Activated naive CD4-positive, alpha-beta T cell treated with anti-CD3 and anti-CD28 coated beads for 36 hours (primary cell): ENCODE measurements at regions of chr2 and their contacts with region 1.

Region 1: GRCh38 chr2:218908721-218909619 is 28.3 kb downstream of the WNT10A start:
- DNase-seq: peak; percentile 96
- H3K4me3 Mint-ChIP-seq: peak overlapping the region; percentile 85
- H3K27ac Mint-ChIP-seq: peak overlapping the region; percentile 72
- H3K4me1 Mint-ChIP-seq: peaks cover 8% of the 10 kb centered on the region
- H3K27me3 Mint-ChIP-seq: peaks cover 18% of the 10 kb centered on the region

Region 2: DNA sequence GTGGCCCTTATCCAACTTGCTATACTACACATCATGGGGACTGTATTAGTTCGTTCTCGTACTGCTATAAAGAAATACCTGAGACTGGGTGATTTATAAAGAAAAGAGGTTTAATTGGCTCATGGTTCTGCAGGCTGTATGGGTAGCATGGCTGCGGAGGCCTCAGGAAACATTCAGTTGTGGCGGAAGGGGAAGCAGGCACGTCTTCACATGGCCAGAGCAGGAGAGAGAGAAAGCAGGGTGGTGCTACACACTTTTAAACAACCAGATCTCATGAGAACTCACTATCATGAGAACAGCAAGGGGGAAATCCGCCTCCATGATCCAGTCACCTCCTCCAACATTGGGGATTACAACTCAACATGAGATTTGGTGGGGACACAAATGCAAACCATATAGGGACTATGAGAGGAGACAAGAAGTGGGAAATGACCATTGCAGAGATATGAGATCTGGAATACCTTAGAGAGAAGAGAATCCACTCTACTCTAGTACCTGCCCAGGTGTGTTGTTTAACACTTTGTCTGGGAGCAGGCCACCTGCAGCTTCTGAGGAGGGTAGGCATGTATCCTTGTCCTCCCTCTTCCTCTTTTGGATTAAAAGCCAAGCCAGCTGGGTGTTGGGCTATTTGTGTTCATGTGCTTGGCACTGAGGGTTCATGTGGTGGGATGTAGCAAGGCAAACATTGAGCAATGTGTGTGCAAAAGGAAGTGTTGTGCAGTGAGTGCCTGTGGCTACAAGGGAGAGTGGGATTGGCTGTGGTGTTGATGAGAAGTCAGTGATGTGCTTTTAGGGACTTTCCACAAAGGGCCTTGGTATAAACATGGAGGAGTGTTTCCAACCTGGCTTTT is 175.6 kb before region 1 on chr2:
- CTCF ChIA-PET with region 1: no interaction called
- intact Hi-C with region 1: loop called (anchors 5 kb)
- DNase-seq: peak; percentile 57
- H3K4me3 Mint-ChIP-seq: no peak overlapping the region
- H3K27ac Mint-ChIP-seq: peak overlapping the region; percentile 20
- H3K4me1 Mint-ChIP-seq: peaks cover 17% of the 10 kb centered on the region
- H3K27me3 Mint-ChIP-seq: no peaks in the 10 kb centered on the region

Region 3: GRCh38 chr2:218876562-218877219 is 32.3 kb before region 1 on chr2:
- CTCF ChIA-PET with region 1: interaction called, 947 read pairs
- intact Hi-C with region 1: no loop called
- DNase-seq: peak; percentile 86
- H3K4me3 Mint-ChIP-seq: no peak overlapping the region
- H3K27ac Mint-ChIP-seq: no peak overlapping the region
- H3K4me1 Mint-ChIP-seq: peaks cover 39% of the 10 kb centered on the region
- H3K27me3 Mint-ChIP-seq: peaks cover 41% of the 10 kb centered on the region

Region 4: DNA sequence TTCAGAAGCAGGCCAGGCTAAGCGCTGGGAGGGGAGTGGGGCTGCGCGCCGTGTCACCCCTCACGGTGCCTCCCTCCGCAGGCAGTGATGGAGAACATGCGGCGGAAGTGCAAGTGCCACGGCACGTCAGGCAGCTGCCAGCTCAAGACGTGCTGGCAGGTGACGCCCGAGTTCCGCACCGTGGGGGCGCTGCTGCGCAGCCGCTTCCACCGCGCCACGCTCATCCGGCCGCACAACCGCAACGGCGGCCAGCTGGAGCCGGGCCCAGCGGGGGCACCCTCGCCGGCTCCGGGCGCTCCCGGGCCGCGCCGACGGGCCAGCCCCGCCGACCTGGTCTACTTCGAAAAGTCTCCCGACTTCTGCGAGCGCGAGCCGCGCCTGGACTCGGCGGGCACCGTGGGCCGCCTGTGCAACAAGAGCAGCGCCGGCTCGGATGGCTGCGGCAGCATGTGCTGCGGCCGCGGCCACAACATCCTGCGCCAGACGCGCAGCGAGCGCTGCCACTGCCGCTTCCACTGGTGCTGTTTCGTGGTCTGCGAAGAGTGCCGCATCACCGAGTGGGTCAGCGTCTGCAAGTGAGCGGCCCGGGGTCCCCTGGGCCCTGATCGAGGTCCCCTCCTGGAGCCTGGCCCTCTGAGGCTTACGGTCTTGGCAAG is 16.1 kb before region 1 on chr2:
- CTCF ChIA-PET with region 1: interaction called, 947 read pairs
- intact Hi-C with region 1: loop called (anchors 1 kb)
- DNase-seq: peak; percentile 90
- H3K4me3 Mint-ChIP-seq: peak overlapping the region; percentile 75
- H3K27ac Mint-ChIP-seq: peak overlapping the region; percentile 76
- H3K4me1 Mint-ChIP-seq: peaks cover 45% of the 10 kb centered on the region
- H3K27me3 Mint-ChIP-seq: no peaks in the 10 kb centered on the region

Region 5: DNA sequence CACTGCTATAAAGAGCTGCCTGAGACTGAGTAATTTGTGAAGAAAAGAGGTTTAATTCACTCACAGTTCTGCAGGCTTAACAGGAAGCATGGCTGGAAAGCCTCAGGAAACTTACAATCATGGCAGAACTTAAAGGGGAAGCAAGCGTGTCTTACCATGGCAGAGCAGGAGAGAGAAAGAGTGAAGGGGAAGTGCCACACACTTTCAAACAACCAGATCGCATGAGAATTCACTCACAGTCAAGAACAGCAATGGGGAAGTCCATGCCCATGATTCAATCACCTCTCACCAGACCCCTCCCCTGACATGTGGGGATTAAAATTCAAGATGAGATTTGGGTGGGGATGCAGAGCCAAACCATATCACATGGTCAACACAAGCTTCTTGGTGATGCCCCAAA is 15.8 kb after region 1 on chr2:
- CTCF ChIA-PET with region 1: no interaction called
- intact Hi-C with region 1: no loop called
- DNase-seq: no peak
- H3K4me3 Mint-ChIP-seq: no peak overlapping the region
- H3K27ac Mint-ChIP-seq: no peak overlapping the region
- H3K4me1 Mint-ChIP-seq: no peaks in the 10 kb centered on the region
- H3K27me3 Mint-ChIP-seq: peaks cover 35% of the 10 kb centered on the region

Region 6: DNA sequence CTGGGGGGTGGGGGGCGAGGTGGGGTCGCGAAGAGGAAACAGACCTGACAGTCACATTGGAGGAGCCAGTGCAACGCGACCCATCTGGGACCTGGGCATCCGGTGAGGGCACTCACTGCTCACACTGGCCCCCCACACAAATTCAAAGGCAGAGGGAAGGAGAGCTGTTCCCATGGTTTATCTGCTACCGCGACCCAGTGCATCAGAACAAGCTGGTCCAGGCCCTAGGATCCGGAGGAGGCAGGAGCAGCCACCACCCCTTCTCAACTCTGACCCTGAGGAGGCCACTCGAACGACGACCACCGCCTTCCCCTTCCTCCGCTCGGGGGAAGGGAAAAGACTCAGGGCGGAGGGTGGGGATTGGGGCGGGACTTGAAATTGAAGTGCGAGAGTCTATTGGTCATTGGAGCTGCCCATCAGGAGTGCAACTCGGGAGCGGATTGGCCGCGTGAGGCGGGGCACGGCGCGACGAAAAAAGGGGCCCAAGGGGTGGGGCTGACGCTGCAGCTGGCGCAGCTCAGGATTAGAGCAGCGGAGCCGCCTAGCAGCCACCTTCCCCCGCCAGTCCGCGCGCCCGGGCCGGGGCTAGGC is 50.3 kb after region 1 on chr2 and contains the start of gene CDK5R2:
- CTCF ChIA-PET with region 1: no interaction called
- intact Hi-C with region 1: loop called (anchors 1 kb)
- DNase-seq: peak; percentile 80
- H3K4me3 Mint-ChIP-seq: peak within 1 kb of the TSS; percentile 41
- H3K27ac Mint-ChIP-seq: no peak within 1 kb of the TSS
- H3K4me1 Mint-ChIP-seq: peaks cover 18% of the 10 kb centered on the region
- H3K27me3 Mint-ChIP-seq: peaks cover 69% of the 10 kb centered on the region
- total RNA-seq, gene CDK5R2: not detected